Heart left ventricle (tissue), 16 donors: ENCODE measurements at regions of chr2 and their contacts with region 1.

Region 1: DNA sequence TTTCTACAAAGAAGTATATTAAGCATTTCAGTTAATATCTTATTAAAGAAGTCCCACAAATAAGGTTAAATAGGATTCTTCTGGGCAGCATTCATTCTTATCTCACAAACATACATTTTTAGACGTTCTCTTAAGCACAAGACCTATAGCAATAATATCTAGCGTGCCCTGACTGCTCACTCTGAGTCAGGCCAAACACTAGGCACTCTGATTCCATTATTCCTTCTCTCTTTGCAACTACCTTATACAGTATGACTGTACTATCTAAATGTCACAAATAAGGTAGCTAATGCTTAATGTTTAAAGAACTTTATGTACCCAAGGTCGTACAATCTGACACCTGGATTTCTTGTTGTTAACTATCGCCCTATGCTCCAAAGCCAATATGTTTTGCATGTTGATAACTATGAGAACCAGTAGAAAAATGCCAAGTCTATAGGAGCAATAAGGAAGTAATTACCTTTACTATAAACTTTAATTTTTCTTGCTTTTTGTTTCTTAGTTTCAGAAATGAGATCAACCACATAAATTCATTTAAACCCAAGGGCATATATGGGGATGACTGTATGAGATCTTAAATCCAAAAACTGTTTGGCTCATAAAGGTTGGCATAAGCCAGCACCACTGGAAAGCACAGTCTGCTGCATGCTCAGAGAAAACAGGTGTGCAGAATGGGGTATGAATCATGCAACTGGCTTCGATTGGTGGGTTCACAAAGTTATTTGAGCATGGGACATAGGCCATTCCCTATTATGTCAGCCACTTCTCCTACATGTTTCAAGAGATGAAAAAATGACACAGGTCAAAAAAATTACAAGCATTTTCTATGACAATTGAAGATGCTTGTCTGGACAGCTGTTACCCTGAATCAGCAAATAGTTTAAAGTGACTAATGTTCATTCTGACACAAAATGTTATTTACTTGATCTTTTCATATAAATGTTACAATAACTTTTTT is 352.0 kb downstream of the IRS1 start:
- DNase-seq: no peak
- ATAC-seq: peak in 1 of 4 donors; percentile 19
- H3K4me3 ChIP-seq: no peak overlapping the region
- H3K27ac ChIP-seq: peak overlapping the region in 5 of 12 donors; percentile 17 to 61 (median 54)
- H3K4me1 ChIP-seq: peaks cover 0 to 33% (median 10%) of the 10 kb centered on the region in 12 donors
- H3K27me3 ChIP-seq: no peaks in the 10 kb centered on the region
- CTCF ChIP-seq: no peak
- POLR2A ChIP-seq: no peak

Region 2: GRCh38 chr2:225660262-225661131 is 787.1 kb before region 1 on chr2:
- intact Hi-C with region 1: no loop called
- DNase-seq: peak; percentile 38 to 76 (median 52)
- ATAC-seq: peak in 3 of 4 donors; percentile 48 to 71 (median 53)
- H3K4me3 ChIP-seq: no peak overlapping the region
- H3K27ac ChIP-seq: no peak overlapping the region
- H3K4me1 ChIP-seq: no peaks in the 10 kb centered on the region
- H3K27me3 ChIP-seq: peaks cover 0 to 33% (median 0%) of the 10 kb centered on the region in 9 donors
- CTCF ChIP-seq: peak; percentile 62 to 89 (median 80)
- POLR2A ChIP-seq: no peak

Region 3: GRCh38 chr2:226515344-226516055 is 67.9 kb after region 1 on chr2:
- intact Hi-C with region 1: loop called in 1 of 10 experiments (anchors 2 kb)
- DNase-seq: no peak
- ATAC-seq: no peak
- H3K4me3 ChIP-seq: no peak overlapping the region
- H3K27ac ChIP-seq: no peak overlapping the region
- H3K4me1 ChIP-seq: no peaks in the 10 kb centered on the region
- H3K27me3 ChIP-seq: no peaks in the 10 kb centered on the region
- CTCF ChIP-seq: no peak
- POLR2A ChIP-seq: no peak